HepG2 (cell line): ENCODE measurements at regions of chr4 and their contacts with region 1.

Region 1: GRCh38 chr4:17347445-17347844 is 164.4 kb downstream of the QDPR start:
- DNase-seq: peak; percentile 39
- ATAC-seq: peak; percentile 86
- H3K4me3 ChIP-seq: no peak overlapping the region
- H3K27ac ChIP-seq: no peak overlapping the region
- H3K4me1 ChIP-seq: no peaks in the 10 kb centered on the region
- H3K27me3 ChIP-seq: no peaks in the 10 kb centered on the region
- CTCF ChIP-seq: peak; percentile 76
- EP300 ChIP-seq: no peak
- POLR2A ChIP-seq: no peak
- RAD21 ChIP-seq: peak; percentile 34; the same call in 1 of the 2 replicates

Region 2: DNA sequence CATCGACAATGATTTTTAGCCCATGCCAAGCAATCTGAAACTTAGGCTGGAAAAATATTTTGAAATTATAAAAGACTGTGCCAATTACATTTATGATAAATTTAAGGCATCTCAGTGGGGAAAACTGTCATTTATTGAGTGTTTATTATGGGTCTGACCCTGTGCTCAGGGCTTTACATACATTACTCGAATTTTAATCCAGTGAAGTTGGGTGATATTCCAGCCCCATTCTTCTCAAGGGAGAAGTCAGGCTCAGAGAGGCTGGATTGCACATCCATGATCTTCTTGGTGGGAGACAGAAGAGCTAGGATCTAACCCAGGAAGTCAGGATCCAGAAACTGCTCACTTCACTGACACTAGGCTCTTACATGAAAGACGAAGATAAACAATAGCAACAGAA is 96.3 kb before region 1 on chr4:
- CTCF ChIA-PET with region 1: no interaction called
- POLR2A ChIA-PET with region 1: no interaction called
- in situ Hi-C with region 1: no loop called
- intact Hi-C with region 1: no loop called
- DNase-seq: no peak
- ATAC-seq: no peak
- H3K4me3 ChIP-seq: no peak overlapping the region
- H3K27ac ChIP-seq: no peak overlapping the region
- H3K4me1 ChIP-seq: peaks cover 8% of the 10 kb centered on the region; the same call in 1 of the 2 replicates
- H3K27me3 ChIP-seq: no peaks in the 10 kb centered on the region; a peak in 1 of 5 replicates
- CTCF ChIP-seq: no peak
- EP300 ChIP-seq: no peak
- POLR2A ChIP-seq: no peak
- RAD21 ChIP-seq: no peak

Region 3: DNA sequence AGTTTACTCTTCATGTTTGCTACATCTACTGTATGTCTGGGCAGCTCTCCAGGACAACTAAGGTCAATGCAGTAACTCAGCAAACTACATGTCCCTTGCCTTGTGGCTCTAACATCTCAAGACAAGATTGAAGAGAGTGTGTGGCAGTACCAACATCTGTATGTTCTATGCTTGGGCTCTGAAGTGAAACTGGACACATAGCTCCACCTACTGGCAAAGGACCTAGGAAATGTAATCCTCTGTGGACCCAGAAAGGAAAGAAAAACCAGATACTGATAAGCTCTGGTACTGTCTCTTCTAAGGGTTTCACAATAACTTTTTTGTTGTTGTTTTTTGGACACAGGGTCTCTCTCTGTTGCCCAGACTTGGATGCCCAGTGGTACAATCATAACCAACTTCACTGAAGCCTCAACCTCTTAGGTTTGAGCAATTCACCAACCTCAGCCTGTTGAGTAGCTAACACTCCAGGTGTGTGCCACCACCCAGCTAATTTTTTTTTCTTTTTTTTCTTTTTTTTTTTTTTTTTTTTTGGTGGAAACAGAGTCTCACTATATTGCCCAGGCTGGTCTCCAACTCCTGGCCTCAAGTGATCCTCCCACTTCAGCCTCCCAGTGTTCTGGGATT is 100.3 kb after region 1 on chr4:
- CTCF ChIA-PET with region 1: interaction called, 17 read pairs
- POLR2A ChIA-PET with region 1: no interaction called
- in situ Hi-C with region 1: loop called (anchors 10 kb)
- intact Hi-C with region 1: loop called (anchors 1 kb)
- DNase-seq: peak; percentile 67
- ATAC-seq: peak; percentile 99
- H3K4me3 ChIP-seq: no peak overlapping the region
- H3K27ac ChIP-seq: no peak overlapping the region
- H3K4me1 ChIP-seq: no peaks in the 10 kb centered on the region
- H3K27me3 ChIP-seq: no peaks in the 10 kb centered on the region; a peak in 1 of 5 replicates
- CTCF ChIP-seq: peak; percentile 89
- EP300 ChIP-seq: no peak
- POLR2A ChIP-seq: no peak
- RAD21 ChIP-seq: 0 out of 2 replicates have a peak, but pooled peaks have one; percentile 25

Region 4: GRCh38 chr4:17494258-17494657 is 146.8 kb after region 1 on chr4:
- CTCF ChIA-PET with region 1: no interaction called
- POLR2A ChIA-PET with region 1: no interaction called
- in situ Hi-C with region 1: no loop called
- intact Hi-C with region 1: no loop called
- DNase-seq: no peak
- ATAC-seq: no peak
- H3K4me3 ChIP-seq: no peak overlapping the region
- H3K27ac ChIP-seq: no peak overlapping the region
- H3K4me1 ChIP-seq: peaks cover 48% of the 10 kb centered on the region
- H3K27me3 ChIP-seq: no peaks in the 10 kb centered on the region
- CTCF ChIP-seq: no peak
- EP300 ChIP-seq: no peak
- POLR2A ChIP-seq: no peak
- RAD21 ChIP-seq: no peak

Region 5: DNA sequence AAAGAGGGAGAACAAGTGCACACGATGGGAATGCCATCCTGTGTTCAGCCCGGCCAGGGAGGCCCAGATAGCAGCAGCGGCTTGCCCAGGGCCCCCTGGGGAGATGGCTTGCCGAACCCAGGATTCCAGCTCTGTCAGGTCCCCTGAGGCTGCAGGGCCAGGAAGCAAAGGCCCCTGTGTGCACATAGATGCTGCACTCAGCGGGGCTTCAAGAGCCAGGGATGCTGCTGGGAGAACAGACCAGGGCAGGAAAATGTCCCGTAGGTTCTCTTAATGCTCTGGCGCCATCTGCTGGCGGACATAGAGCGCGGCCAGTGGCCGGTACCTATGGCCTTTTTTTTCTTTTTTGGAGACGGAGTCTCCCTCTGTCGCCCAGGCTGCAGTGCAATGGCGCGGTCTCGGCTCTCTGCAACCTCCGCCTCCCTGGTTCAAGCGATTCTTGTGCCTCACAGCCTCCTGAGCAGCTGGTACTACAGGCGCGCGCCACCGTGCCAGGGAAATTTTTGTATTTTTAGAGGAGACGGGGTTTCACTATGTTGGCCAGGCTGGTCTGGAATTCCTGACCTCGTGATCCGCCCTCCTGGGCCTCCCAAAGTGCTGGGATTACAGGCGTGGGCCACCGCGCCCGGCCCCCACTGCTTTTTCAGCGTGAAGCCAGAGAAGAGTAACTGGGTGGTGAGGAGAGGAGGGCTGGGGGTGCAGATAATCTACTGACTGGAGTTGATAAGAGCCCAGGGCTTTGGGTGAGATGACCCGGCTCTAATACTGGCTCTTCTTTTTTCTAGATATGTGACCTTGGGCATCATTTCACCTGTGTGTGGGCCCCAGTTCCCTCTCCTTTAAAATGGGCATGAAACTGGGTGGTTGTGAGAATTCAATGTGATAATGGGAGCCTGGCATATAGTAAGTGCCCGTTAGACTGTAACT is 289.5 kb after region 1 on chr4:
- CTCF ChIA-PET with region 1: no interaction called
- POLR2A ChIA-PET with region 1: no interaction called
- in situ Hi-C with region 1: no loop called
- intact Hi-C with region 1: loop called (anchors 2 kb)
- DNase-seq: peak; percentile 64
- ATAC-seq: peak; percentile 94
- H3K4me3 ChIP-seq: no peak overlapping the region
- H3K27ac ChIP-seq: no peak overlapping the region
- H3K4me1 ChIP-seq: peaks cover 9% of the 10 kb centered on the region; the same call in 1 of the 2 replicates
- H3K27me3 ChIP-seq: no peaks in the 10 kb centered on the region
- CTCF ChIP-seq: peak; percentile 89
- EP300 ChIP-seq: no peak
- POLR2A ChIP-seq: no peak
- RAD21 ChIP-seq: peak; percentile 91